ENCODE measurements at regions of chr1 and their contacts with region 1.

Region 1: GRCh38 chr1:26417111-26417759 is 6.6 kb downstream of the LIN28A start:
- DNase-seq: peak; percentile 74
- H3K4me3 ChIP-seq: no peak overlapping the region
- H3K27ac ChIP-seq: no peak overlapping the region
- H3K4me1 ChIP-seq: no peaks in the 10 kb centered on the region
- H3K27me3 ChIP-seq: peaks cover 53% of the 10 kb centered on the region
- CTCF ChIP-seq: peak; percentile 90

Region 2: DNA sequence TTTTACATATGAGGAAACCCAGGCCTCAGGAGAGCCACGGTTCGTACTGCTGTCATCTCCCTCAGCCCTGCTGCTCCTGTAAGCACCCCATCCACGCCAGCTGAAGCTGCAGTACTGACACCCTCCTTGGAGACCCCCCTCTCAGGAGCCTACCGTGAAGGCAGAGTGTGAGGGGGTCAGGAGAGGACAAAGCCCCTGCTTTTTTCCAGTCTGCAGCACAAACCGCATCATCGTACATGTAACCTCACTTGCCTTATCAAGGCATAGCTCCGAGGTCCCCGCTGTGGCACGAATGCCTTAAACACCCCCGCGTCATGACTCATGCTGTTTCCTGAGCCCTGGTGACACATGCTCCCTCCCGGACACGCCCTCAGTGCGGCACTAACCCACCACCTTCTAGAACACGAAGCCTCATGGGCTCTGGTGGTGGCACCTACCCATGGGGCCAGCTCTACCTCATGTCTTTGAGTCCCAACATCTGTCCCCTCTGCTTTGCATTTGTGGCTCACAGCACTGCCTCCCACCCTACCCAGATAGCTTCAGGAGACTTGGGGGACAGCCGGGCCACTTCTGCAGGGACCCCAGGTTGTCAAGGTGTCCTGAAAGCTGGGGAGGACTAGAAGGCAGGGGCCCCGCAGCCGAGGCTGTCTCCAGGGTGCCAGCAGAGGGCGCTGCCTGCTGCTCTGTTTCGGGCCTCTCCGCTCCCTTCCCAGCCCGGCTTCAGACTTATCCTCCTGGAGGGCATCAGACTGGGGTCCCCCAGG is 132.5 kb before region 1 on chr1:
- CTCF ChIA-PET with region 1: interaction called, 10 read pairs
- POLR2A ChIA-PET with region 1: no interaction called
- intact Hi-C with region 1: loop called (anchors 5 kb)
- DNase-seq: peak; percentile 93
- H3K4me3 ChIP-seq: no peak overlapping the region
- H3K27ac ChIP-seq: peak overlapping the region; percentile 36
- H3K4me1 ChIP-seq: peaks cover 29% of the 10 kb centered on the region
- H3K27me3 ChIP-seq: no peaks in the 10 kb centered on the region
- CTCF ChIP-seq: peak; percentile 93